B cell (primary cell): ENCODE measurements at regions of chr1 and their contacts with region 1.

Region 1: GRCh38 chr1:198756470-198756869 is 117.6 kb downstream of the PTPRC start:
- DNase-seq: no peak
- ATAC-seq: no peak
- H3K4me3 ChIP-seq: no peak overlapping the region
- H3K4me3 Mint-ChIP-seq: no peak overlapping the region
- H3K27ac ChIP-seq: no peak overlapping the region
- H3K27ac Mint-ChIP-seq: no peak overlapping the region
- H3K4me1 ChIP-seq: peaks cover 0 to 10% of the 10 kb centered on the region in 2 donors
- H3K4me1 Mint-ChIP-seq: peaks cover 28% of the 10 kb centered on the region
- H3K27me3 ChIP-seq: no peaks in the 10 kb centered on the region
- H3K27me3 Mint-ChIP-seq: no peaks in the 10 kb centered on the region
- CTCF ChIP-seq: peak; percentile 44

Region 2: DNA sequence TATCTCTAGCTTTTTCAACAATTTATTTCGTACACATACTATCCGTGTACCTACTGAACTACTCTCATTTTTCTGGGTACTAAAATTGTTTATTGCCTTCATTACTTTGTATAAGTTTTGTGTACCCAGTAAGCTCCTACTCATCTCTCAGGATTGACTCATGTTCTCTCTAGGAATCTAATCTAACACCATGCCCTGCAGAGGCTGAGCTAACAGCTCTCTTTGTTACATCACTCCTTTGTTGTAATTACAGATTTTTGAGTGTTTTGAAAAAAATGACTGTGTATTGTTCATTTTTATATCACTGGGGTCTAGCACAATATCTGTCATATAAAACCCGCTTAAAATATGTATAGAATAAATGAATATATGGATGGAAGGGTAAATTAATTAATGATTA is 383.1 kb before region 1 on chr1:
- CTCF ChIA-PET with region 1: no interaction called
- POLR2A ChIA-PET with region 1: no interaction called
- intact Hi-C with region 1: no loop called
- DNase-seq: no peak
- ATAC-seq: no peak
- H3K4me3 ChIP-seq: no peak overlapping the region
- H3K4me3 Mint-ChIP-seq: no peak overlapping the region
- H3K27ac ChIP-seq: no peak overlapping the region
- H3K27ac Mint-ChIP-seq: no peak overlapping the region
- H3K4me1 ChIP-seq: no peaks in the 10 kb centered on the region
- H3K4me1 Mint-ChIP-seq: no peaks in the 10 kb centered on the region
- H3K27me3 ChIP-seq: peaks cover 0 to 3% (median 0%) of the 10 kb centered on the region in 4 experiments
- H3K27me3 Mint-ChIP-seq: peaks cover 5% of the 10 kb centered on the region
- CTCF ChIP-seq: no peak

Region 3: DNA sequence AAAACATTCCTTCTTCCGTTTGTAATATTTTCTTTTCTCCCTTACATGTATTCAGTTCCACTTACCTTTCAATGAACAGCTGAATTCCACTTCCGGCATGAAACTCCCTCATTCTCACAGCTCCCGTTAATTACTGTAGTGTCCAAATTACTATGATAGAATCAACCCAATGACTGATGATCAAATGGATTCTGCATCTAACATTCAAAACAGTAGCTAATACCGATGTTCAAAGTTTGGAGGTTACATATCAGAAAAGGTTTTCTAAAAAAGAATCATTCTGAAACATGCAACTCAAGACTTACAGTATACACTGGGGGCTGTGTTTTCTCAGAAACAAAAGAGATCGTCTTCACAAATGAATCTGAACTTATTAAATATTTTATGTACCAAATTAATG is 40.4 kb before region 1 on chr1:
- CTCF ChIA-PET with region 1: no interaction called
- POLR2A ChIA-PET with region 1: no interaction called
- intact Hi-C with region 1: loop called (anchors 5 kb)
- DNase-seq: no peak
- ATAC-seq: no peak
- H3K4me3 ChIP-seq: no peak overlapping the region
- H3K4me3 Mint-ChIP-seq: no peak overlapping the region
- H3K27ac ChIP-seq: no peak overlapping the region
- H3K27ac Mint-ChIP-seq: no peak overlapping the region
- H3K4me1 ChIP-seq: no peaks in the 10 kb centered on the region
- H3K4me1 Mint-ChIP-seq: peaks cover 4% of the 10 kb centered on the region
- H3K27me3 ChIP-seq: no peaks in the 10 kb centered on the region
- H3K27me3 Mint-ChIP-seq: no peaks in the 10 kb centered on the region
- CTCF ChIP-seq: no peak

Region 4: GRCh38 chr1:198798923-198799386 is 42.5 kb after region 1 on chr1:
- CTCF ChIA-PET with region 1: no interaction called
- POLR2A ChIA-PET with region 1: no interaction called
- intact Hi-C with region 1: no loop called
- DNase-seq: no peak
- ATAC-seq: no peak
- H3K4me3 ChIP-seq: no peak overlapping the region
- H3K4me3 Mint-ChIP-seq: no peak overlapping the region
- H3K27ac ChIP-seq: no peak overlapping the region
- H3K27ac Mint-ChIP-seq: no peak overlapping the region
- H3K4me1 ChIP-seq: no peaks in the 10 kb centered on the region
- H3K4me1 Mint-ChIP-seq: no peaks in the 10 kb centered on the region
- H3K27me3 ChIP-seq: no peaks in the 10 kb centered on the region
- H3K27me3 Mint-ChIP-seq: no peaks in the 10 kb centered on the region
- CTCF ChIP-seq: no peak

Region 5: GRCh38 chr1:199041173-199041914 is 284.9 kb after region 1 on chr1:
- CTCF ChIA-PET with region 1: no interaction called
- POLR2A ChIA-PET with region 1: no interaction called
- intact Hi-C with region 1: no loop called
- DNase-seq: peak; percentile 53
- ATAC-seq: peak; percentile 33
- H3K4me3 ChIP-seq: no peak overlapping the region
- H3K4me3 Mint-ChIP-seq: peak overlapping the region; percentile 3
- H3K27ac ChIP-seq: no peak overlapping the region
- H3K27ac Mint-ChIP-seq: no peak overlapping the region
- H3K4me1 ChIP-seq: peaks cover 7 to 22% of the 10 kb centered on the region in 2 donors
- H3K4me1 Mint-ChIP-seq: peaks cover 20% of the 10 kb centered on the region
- H3K27me3 ChIP-seq: peaks cover 0 to 29% (median 4%) of the 10 kb centered on the region in 4 experiments
- H3K27me3 Mint-ChIP-seq: peaks cover 22% of the 10 kb centered on the region
- CTCF ChIP-seq: no peak

Region 6: GRCh38 chr1:199243423-199244061 is 487.1 kb after region 1 on chr1:
- CTCF ChIA-PET with region 1: interaction called, 7 read pairs
- POLR2A ChIA-PET with region 1: no interaction called
- intact Hi-C with region 1: loop called (anchors 5 kb)
- DNase-seq: peak; percentile 74
- ATAC-seq: peak; percentile 84
- H3K4me3 ChIP-seq: no peak overlapping the region
- H3K4me3 Mint-ChIP-seq: no peak overlapping the region
- H3K27ac ChIP-seq: no peak overlapping the region
- H3K27ac Mint-ChIP-seq: no peak overlapping the region
- H3K4me1 ChIP-seq: peaks cover 9 to 18% of the 10 kb centered on the region in 2 donors
- H3K4me1 Mint-ChIP-seq: peaks cover 14% of the 10 kb centered on the region
- H3K27me3 ChIP-seq: no peaks in the 10 kb centered on the region
- H3K27me3 Mint-ChIP-seq: no peaks in the 10 kb centered on the region
- CTCF ChIP-seq: peak; percentile 81